ENCODE measurements at regions of chr3 and their contacts with region 1.

Region 1: DNA sequence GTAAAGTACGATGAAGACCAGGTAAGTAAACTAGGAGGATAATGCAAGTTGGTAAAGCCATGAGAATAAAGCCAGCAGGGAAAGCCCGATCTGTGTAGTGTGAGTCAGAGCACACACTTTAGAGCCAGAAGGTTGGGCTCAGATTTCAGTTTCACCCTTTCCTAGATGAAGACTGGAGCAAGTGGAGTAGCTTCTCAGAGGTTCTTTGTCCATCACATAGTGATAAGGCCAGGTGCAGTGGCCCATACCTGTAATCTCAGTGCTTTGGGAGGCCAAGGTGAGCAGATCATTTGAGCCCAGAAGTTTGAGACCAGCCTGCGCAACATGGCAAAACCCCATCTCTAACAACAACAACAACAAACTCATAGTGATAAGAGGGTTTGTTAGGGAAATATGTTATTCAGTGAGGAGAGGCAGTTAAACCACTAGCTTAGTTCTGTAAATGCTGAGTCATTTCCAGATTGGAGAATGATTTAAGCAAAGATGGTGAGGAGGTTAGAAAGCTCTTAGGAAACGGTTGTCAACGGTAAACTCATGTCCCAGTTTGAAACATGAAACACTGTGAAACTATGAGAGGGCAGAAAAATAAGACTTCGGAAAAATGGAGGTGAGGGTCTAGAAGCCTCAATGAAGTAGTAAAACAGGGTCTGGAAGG is 39.0 kb downstream of the IL12A start:
- DNase-seq: no peak
- ATAC-seq: no peak
- H3K4me3 ChIP-seq: no peak overlapping the region
- H3K27ac ChIP-seq: no peak overlapping the region
- H3K4me1 ChIP-seq: no peaks in the 10 kb centered on the region
- H3K27me3 ChIP-seq: no peaks in the 10 kb centered on the region
- CTCF ChIP-seq: no peak
- POLR2A ChIP-seq: no peak

Region 2: DNA sequence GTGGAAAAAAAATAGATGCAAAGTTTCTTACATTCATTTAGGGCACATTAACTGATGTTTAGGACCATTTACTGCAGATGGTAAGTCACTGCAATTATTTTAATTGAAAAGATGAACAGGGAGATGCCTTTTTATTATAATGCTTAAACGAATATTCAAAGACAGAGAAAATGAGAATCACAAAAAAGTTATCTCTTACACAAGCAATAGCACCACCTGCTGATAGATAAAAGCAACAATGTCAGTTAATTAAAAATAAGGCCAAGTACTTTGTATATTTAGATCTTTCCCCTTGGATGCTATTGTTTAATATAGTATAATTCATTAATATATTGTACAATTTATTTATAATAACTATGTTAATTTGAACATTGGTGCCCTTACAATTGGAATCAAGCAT is 315.5 kb after region 1 on chr3:
- in situ Hi-C with region 1: loop called in 2 of 4 experiments (anchors 25 kb)
- intact Hi-C with region 1: loop called (anchors 2 kb)
- DNase-seq: no peak
- ATAC-seq: no peak
- H3K4me3 ChIP-seq: no peak overlapping the region
- H3K27ac ChIP-seq: no peak overlapping the region
- H3K4me1 ChIP-seq: no peaks in the 10 kb centered on the region
- H3K27me3 ChIP-seq: no peaks in the 10 kb centered on the region
- CTCF ChIP-seq: peak in 2 of 5 experiments; percentile 25 to 36
- POLR2A ChIP-seq: no peak